PC-9 (cell line): ENCODE measurements at regions of chr1 and their contacts with region 1.

Region 1: DNA sequence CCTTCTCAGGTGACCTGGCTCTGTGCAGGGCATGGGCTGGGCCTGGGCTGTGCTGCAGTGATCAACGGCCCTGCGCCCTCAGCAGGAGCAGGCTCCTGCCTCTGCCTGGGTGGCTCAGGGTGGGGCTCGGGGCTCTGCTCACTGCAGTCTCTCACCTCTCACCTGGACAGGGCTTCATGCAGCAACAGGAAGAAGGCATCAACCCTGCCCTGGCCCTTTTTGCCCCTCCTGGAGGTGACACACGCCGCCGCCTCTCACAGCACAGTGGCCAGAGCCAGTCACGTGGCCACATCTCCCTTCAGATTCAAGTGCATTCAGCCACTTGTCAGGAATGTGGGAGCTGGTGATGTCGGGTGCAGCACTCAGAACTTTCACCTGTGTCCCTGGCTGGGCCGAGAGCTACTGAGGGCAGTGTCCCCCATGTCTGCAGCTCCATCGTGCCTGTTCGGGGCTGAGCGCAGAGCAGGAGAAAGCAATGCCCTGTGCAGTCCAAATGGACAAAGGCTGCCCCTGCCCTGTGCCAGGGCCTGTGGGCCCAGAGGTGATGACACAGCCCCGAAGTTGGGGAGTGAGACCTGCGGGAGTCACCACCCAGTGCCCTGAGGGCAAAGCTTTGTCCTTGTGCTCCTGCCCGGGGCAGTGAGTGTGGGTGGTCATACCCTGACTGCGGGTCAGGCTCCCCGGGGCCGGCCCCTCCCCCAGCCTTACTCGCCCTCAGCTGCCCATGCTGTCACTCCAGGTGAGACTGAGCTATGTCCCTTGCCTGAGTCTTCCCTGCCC is 314.0 kb downstream of the PTPRU start:
- DNase-seq: peak; percentile 91 to 92
- H3K4me3 ChIP-seq: peak overlapping the region; percentile 48; the same call in 1 of the 2 replicates
- H3K27ac ChIP-seq: peak overlapping the region; percentile 81
- H3K4me1 ChIP-seq: peaks cover 33% of the 10 kb centered on the region
- H3K27me3 ChIP-seq: no peaks in the 10 kb centered on the region
- CTCF ChIP-seq: no peak

Region 2: GRCh38 chr1:29297450-29297849 is 252.9 kb before region 1 on chr1:
- CTCF ChIA-PET with region 1: no interaction called
- POLR2A ChIA-PET with region 1: no interaction called
- intact Hi-C with region 1: no loop called
- DNase-seq: no peak
- H3K4me3 ChIP-seq: no peak overlapping the region
- H3K27ac ChIP-seq: no peak overlapping the region
- H3K4me1 ChIP-seq: peaks cover under 1% of the 10 kb centered on the region; the same call in 1 of the 2 replicates
- H3K27me3 ChIP-seq: no peaks in the 10 kb centered on the region
- CTCF ChIP-seq: no peak

Region 3: GRCh38 chr1:29410476-29410875 is 139.8 kb before region 1 on chr1:
- CTCF ChIA-PET with region 1: no interaction called
- POLR2A ChIA-PET with region 1: no interaction called
- intact Hi-C with region 1: no loop called
- DNase-seq: no peak
- H3K4me3 ChIP-seq: no peak overlapping the region
- H3K27ac ChIP-seq: no peak overlapping the region
- H3K4me1 ChIP-seq: no peaks in the 10 kb centered on the region
- H3K27me3 ChIP-seq: no peaks in the 10 kb centered on the region
- CTCF ChIP-seq: no peak

Region 4: GRCh38 chr1:29639741-29640427 is 89.6 kb after region 1 on chr1:
- CTCF ChIA-PET with region 1: no interaction called
- POLR2A ChIA-PET with region 1: no interaction called
- intact Hi-C with region 1: loop called (anchors 5 kb)
- DNase-seq: peak; percentile 85 to 87
- H3K4me3 ChIP-seq: no peak overlapping the region
- H3K27ac ChIP-seq: peak overlapping the region; percentile 66
- H3K4me1 ChIP-seq: peaks cover 27% of the 10 kb centered on the region
- H3K27me3 ChIP-seq: no peaks in the 10 kb centered on the region
- CTCF ChIP-seq: no peak